AG04450 (cell line): ENCODE measurements at regions of chr20 and their contacts with region 1.

Region 1: GRCh38 chr20:50504231-50504823 is 5.9 kb upstream of the PTPN1 start:
- DNase-seq: no peak
- H3K4me3 ChIP-seq: no peak overlapping the region
- H3K27ac ChIP-seq: no peak overlapping the region
- H3K27me3 ChIP-seq: no peaks in the 10 kb centered on the region
- CTCF ChIP-seq: 0 out of 2 replicates have a peak, but pooled peaks have one; percentile 1

Region 2: GRCh38 chr20:50360029-50360672 is 144.2 kb before region 1 on chr20:
- CTCF ChIA-PET with region 1: no interaction called
- POLR2A ChIA-PET with region 1: no interaction called
- DNase-seq: no peak
- H3K4me3 ChIP-seq: no peak overlapping the region
- H3K27ac ChIP-seq: no peak overlapping the region
- H3K27me3 ChIP-seq: peaks cover 4% of the 10 kb centered on the region
- CTCF ChIP-seq: no peak

Region 3: GRCh38 chr20:50588034-50588611 is 83.8 kb after region 1 on chr20:
- CTCF ChIA-PET with region 1: interaction called, 10 read pairs
- POLR2A ChIA-PET with region 1: no interaction called
- DNase-seq: no peak
- H3K4me3 ChIP-seq: no peak overlapping the region
- H3K27ac ChIP-seq: no peak overlapping the region
- H3K27me3 ChIP-seq: no peaks in the 10 kb centered on the region
- CTCF ChIP-seq: peak; percentile 97